ENCODE measurements at regions of chr12 and their contacts with region 1.

Region 1: DNA sequence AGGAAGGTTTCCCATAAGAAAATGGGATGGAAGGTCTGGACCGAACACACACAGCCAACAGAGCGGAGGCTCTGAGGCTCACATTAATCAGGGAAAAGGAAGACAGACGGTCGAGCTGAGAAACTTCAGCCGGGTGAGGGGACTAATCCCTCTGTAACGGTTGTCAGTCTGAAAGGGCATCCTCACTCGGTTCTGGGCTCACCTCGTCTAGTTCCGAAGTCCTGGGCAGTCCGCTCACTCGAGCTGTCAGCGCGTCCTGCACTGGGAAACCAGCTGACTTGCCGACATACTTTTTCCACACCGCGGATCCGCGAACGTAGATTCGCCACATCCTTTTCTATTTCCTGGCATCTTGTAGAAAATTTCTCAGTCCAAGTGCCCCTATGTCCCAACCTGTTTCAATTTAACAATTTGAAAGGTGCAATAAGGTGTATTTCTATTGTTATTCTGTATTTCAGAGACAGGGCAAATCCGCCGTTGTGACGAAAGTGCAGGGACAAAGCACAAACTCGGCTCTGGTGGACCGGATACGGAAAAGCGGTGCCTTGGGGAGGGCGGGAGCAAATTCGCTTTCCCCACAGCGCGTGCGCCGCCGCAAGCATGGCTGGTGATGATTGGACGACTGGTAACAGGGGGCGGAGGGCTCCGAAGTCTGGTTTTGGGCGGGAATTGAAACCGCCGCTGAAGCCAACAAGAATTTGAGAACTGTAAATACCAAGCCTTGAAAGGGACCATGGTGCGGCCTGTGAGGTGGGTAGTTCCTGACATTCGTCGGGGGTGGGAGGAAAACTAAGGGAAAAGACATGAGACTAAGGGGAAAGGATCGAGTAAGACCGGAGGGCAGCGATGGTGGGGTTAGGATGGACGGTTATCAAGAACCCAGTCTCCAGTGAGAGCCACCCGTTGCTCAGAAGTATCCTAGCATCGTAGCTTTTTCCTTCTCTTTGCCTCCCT is at the start of gene RAD51AP1:
- DNase-seq: peak; percentile 89 to 99 (median 94)
- ATAC-seq: peak; percentile 99
- H3K4me3 ChIP-seq: peak within 1 kb of the TSS; percentile 80
- H3K4me3 Mint-ChIP-seq: peak within 1 kb of the TSS; percentile 98
- H3K27ac ChIP-seq: peak within 1 kb of the TSS; percentile 81 to 95
- H3K27ac Mint-ChIP-seq: peak within 1 kb of the TSS; percentile 99
- H3K4me1 ChIP-seq: peaks cover 7% of the 10 kb centered on the region
- H3K4me1 Mint-ChIP-seq: peaks cover 37% of the 10 kb centered on the region
- H3K27me3 ChIP-seq: no peaks in the 10 kb centered on the region
- H3K27me3 Mint-ChIP-seq: no peaks in the 10 kb centered on the region
- CTCF ChIP-seq: no peak
- total RNA-seq, gene RAD51AP1: 0.45 to 0.93 TPM

Region 2: GRCh38 chr12:3752741-3753486 is 785.6 kb before region 1 on chr12 and contains the start of gene CRACR2A:
- CTCF ChIA-PET with region 1: no interaction called
- POLR2A ChIA-PET with region 1: no interaction called
- intact Hi-C with region 1: loop called in 1 of 2 experiments (anchors 10 kb)
- DNase-seq: peak; percentile 70 to 92 (median 79)
- ATAC-seq: peak; percentile 78
- H3K4me3 ChIP-seq: peak within 1 kb of the TSS; percentile 92
- H3K4me3 Mint-ChIP-seq: peak within 1 kb of the TSS; percentile 89
- H3K27ac ChIP-seq: peak within 1 kb of the TSS; percentile 92 to 95
- H3K27ac Mint-ChIP-seq: peak within 1 kb of the TSS; percentile 92
- H3K4me1 ChIP-seq: peaks cover 68% of the 10 kb centered on the region
- H3K4me1 Mint-ChIP-seq: peaks cover 71% of the 10 kb centered on the region
- H3K27me3 ChIP-seq: no peaks in the 10 kb centered on the region
- H3K27me3 Mint-ChIP-seq: no peaks in the 10 kb centered on the region
- CTCF ChIP-seq: peak; percentile 80
- total RNA-seq, gene CRACR2A: 23.5 to 27.5 TPM

Region 3: DNA sequence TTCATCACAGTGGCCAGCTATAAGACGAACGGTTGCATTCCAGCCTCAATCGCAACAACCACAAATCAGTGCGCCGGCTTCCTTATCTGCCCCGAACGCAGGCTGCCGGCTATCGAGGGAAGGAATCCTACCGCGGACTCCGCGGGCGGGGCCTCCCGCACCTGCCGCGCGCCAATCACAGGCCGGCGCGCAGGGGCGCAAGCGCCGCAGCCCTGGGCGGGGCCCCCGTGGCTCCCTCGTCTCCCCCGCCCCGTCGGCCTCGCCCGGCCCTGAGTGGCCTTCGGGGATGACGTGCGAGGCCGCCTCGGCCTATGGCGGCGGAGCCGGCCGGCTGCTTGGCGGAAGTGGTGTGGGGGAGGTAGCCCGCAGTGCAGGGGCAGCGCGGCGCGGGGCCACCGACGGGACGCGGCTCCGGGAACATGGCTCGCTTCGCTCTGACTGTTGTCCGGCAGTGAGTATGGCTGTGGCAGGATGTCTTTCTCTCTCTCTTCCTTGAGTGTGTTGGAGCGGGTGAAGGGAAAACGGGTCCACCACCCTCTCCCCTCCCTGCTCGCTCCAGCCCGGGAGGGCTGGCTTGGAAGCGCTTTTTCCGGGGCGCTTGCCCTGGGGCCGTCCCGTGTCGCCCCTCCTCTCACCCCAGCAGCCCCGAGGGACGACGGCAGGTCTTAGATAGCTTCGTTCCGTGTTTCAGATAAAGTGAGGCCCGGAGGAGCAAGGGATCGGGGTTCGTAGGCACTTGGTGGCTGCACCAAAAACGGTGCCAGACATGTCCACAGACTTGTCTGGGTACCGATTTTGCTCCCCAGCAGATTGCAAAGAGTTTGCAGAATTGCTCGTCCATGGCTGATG is 217.4 kb before region 1 on chr12 and contains the start of gene TIGAR:
- CTCF ChIA-PET with region 1: no interaction called
- POLR2A ChIA-PET with region 1: no interaction called
- intact Hi-C with region 1: loop called in 1 of 2 experiments (anchors 5 kb)
- DNase-seq: peak; percentile 75 to 97 (median 86)
- ATAC-seq: peak; percentile 94
- H3K4me3 ChIP-seq: peak within 1 kb of the TSS; percentile 85
- H3K4me3 Mint-ChIP-seq: peak within 1 kb of the TSS; percentile 84
- H3K27ac ChIP-seq: peak within 1 kb of the TSS; percentile 80 to 86
- H3K27ac Mint-ChIP-seq: peak within 1 kb of the TSS; percentile 84
- H3K4me1 ChIP-seq: peaks cover 26% of the 10 kb centered on the region
- H3K4me1 Mint-ChIP-seq: peaks cover 44% of the 10 kb centered on the region
- H3K27me3 ChIP-seq: no peaks in the 10 kb centered on the region
- H3K27me3 Mint-ChIP-seq: no peaks in the 10 kb centered on the region
- CTCF ChIP-seq: no peak
- total RNA-seq, gene TIGAR: 5.3 to 7.1 TPM

Region 4: GRCh38 chr12:4490973-4491372 is 47.5 kb before region 1 on chr12:
- CTCF ChIA-PET with region 1: no interaction called
- POLR2A ChIA-PET with region 1: no interaction called
- intact Hi-C with region 1: loop called in 1 of 2 experiments (anchors 5 kb)
- DNase-seq: no peak
- ATAC-seq: peak; percentile 57
- H3K4me3 ChIP-seq: no peak overlapping the region
- H3K4me3 Mint-ChIP-seq: no peak overlapping the region
- H3K27ac ChIP-seq: no peak overlapping the region
- H3K27ac Mint-ChIP-seq: peak overlapping the region; percentile 47
- H3K4me1 ChIP-seq: no peaks in the 10 kb centered on the region
- H3K4me1 Mint-ChIP-seq: peaks cover 10% of the 10 kb centered on the region
- H3K27me3 ChIP-seq: no peaks in the 10 kb centered on the region
- H3K27me3 Mint-ChIP-seq: no peaks in the 10 kb centered on the region
- CTCF ChIP-seq: no peak

Region 5: GRCh38 chr12:4506870-4507269 is 31.6 kb before region 1 on chr12:
- CTCF ChIA-PET with region 1: no interaction called
- POLR2A ChIA-PET with region 1: interaction called, 17 read pairs
- intact Hi-C with region 1: no loop called
- DNase-seq: peak in 4 of 14 experiments; percentile 19 to 79 (median 74)
- ATAC-seq: peak; percentile 94
- H3K4me3 ChIP-seq: peak overlapping the region; percentile 17
- H3K4me3 Mint-ChIP-seq: peak overlapping the region; percentile 81
- H3K27ac ChIP-seq: peak overlapping the region in 1 of 2 donors; percentile 33
- H3K27ac Mint-ChIP-seq: peak overlapping the region; percentile 84
- H3K4me1 ChIP-seq: no peaks in the 10 kb centered on the region
- H3K4me1 Mint-ChIP-seq: peaks cover 36% of the 10 kb centered on the region
- H3K27me3 ChIP-seq: no peaks in the 10 kb centered on the region
- H3K27me3 Mint-ChIP-seq: no peaks in the 10 kb centered on the region
- CTCF ChIP-seq: no peak